ENCODE measurements at regions of chr3 and their contacts with region 1.

Region 1: GRCh38 chr3:137304313-137305056 is 346.7 kb downstream of the IL20RB start:
- DNase-seq: peak; percentile 25 to 59
- H3K4me3 ChIP-seq: no peak overlapping the region
- H3K27ac ChIP-seq: no peak overlapping the region
- H3K4me1 ChIP-seq: no peaks in the 10 kb centered on the region
- H3K27me3 ChIP-seq: no peaks in the 10 kb centered on the region
- CTCF ChIP-seq: peak; percentile 52 to 75 (median 74)
- EP300 ChIP-seq: no peak
- POLR2A ChIP-seq: no peak
- RAD21 ChIP-seq: peak; percentile 67 to 78

Region 2: DNA sequence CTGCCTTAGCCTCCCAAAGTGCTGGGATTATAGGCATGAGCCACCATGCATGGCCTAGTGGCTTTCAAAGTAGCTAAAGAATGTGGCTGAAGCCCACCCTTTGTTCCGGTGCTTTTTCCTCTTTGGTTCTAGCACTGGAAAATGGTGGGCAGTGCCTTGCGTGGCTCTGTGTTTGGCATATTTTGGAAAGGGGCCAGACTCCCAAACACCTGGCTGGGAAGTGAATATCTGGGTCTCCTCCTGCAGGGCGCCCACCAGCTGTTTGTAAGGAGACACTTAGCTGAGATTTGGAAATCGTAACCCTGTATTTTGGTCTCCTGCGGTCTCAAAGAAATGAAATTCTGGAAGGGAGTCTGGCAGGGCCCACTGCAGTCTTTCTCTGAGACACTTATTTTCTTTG is 10.3 kb before region 1 on chr3:
- CTCF ChIA-PET with region 1: interaction called, 31 read pairs
- POLR2A ChIA-PET with region 1: no interaction called
- DNase-seq: no peak
- H3K4me3 ChIP-seq: no peak overlapping the region
- H3K27ac ChIP-seq: no peak overlapping the region
- H3K4me1 ChIP-seq: peaks cover 0 to 10% (median 6%) of the 10 kb centered on the region in 4 experiments; a peak in 4 of 7 replicates
- H3K27me3 ChIP-seq: no peaks in the 10 kb centered on the region
- CTCF ChIP-seq: no peak
- EP300 ChIP-seq: no peak
- POLR2A ChIP-seq: no peak
- RAD21 ChIP-seq: no peak